ENCODE measurements at regions of chr19 and their contacts with region 1.

Region 1: GRCh38 chr19:17282488-17283255 is 971 bp downstream of the ANKLE1 start:
- DNase-seq: peak; percentile 79 to 94 (median 86)
- H3K4me3 ChIP-seq: peak overlapping the region in 1 of 4 donors; percentile 41
- H3K27ac ChIP-seq: no peak overlapping the region
- H3K4me1 ChIP-seq: peaks cover 10 to 17% of the 10 kb centered on the region in 2 donors
- H3K27me3 ChIP-seq: peaks cover 6% of the 10 kb centered on the region
- CTCF ChIP-seq: peak; percentile 73 to 96 (median 90)
- POLR2A ChIP-seq: no peak

Region 2: GRCh38 chr19:17069218-17069617 is 213.5 kb before region 1 on chr19:
- intact Hi-C with region 1: loop called (anchors 5 kb)
- DNase-seq: no peak
- H3K4me3 ChIP-seq: no peak overlapping the region
- H3K27ac ChIP-seq: no peak overlapping the region
- H3K4me1 ChIP-seq: peaks cover 3 to 5% of the 10 kb centered on the region in 2 donors
- H3K27me3 ChIP-seq: no peaks in the 10 kb centered on the region
- CTCF ChIP-seq: no peak
- POLR2A ChIP-seq: no peak

Region 3: DNA sequence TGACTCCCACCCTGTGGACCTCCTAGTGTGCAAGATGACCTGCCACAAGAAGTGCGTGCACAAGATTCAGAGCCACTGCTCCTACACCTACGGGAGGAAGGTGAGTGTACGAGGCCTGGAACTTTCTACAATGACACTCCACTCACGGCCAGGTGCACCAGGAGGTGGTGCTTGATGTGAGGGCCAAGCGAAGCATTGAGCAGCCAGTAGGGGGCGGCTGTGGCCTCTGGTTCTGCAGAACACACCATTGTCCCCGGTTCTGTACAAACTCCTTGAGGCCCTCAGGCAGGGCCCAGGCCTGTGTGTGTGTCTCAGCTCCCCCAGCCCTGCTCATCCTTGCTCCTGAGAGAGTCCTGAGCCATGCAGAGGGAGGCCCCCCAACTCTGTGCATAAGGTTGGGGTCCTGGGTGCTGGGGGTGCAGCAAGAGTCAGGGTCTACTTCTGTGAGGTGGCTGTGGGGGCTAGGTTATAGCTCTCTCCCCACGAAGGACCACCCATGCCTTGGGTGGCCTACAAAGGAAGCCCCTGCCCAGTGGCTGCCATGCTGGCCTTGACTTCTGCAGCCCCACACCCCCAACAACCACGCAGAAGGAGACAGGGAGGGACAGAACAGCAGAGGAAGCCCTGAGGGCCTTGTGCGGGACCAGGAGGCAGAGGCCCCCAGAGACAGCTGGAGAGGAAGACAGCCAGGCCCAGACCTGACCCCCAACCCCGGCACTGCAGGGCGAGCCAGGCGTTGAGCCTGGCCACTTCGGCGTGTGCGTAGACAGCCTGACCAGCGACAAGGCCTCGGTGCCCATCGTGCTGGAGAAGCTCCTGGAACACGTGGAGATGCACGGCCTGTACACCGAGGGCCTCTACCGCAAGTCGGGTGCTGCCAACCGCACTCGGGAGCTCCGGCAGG is 77.2 kb before region 1 on chr19:
- intact Hi-C with region 1: loop called (anchors 2 to 10 kb)
- DNase-seq: peak; percentile 63 to 89 (median 79)
- H3K4me3 ChIP-seq: no peak overlapping the region
- H3K27ac ChIP-seq: no peak overlapping the region
- H3K4me1 ChIP-seq: no peaks in the 10 kb centered on the region
- H3K27me3 ChIP-seq: no peaks in the 10 kb centered on the region
- CTCF ChIP-seq: peak; percentile 65 to 86 (median 68)
- POLR2A ChIP-seq: no peak

Region 4: DNA sequence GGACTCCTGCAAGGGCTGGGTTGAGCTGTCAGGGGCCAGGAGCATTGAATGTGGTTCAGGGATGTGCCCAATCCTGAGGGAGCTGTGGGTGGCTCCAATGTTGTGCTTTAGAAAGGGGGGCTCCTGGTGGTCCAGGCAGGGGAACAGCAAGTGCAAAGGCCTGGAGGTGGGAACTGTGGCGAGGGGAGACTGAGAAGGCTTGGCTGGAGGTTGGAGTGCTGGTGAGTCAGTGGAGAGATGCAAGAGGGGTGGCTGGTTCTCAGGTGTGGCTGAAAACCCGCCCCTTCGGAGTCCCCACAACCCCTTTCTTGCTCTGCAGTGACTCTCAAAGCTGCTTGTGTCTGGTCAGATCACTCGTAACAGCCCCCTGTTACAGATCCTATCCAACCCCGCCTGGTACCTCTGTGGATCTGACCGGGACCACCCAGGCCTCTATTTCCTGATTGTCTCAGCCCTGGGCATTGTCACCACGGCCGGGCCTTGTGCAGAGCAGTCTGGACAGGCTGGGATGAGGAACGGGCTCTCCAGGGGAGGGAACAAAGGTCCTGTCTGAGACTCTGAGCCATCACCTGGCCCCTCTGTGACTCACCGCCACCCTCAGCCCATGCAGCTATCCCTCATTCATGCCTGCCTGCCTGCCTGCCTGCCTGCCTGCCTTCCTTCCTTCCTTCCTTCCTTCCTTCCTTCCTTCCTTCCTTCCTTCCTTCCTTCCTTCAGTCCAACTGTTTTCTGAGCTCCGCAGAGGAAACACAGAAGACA is 682.9 kb after region 1 on chr19:
- intact Hi-C with region 1: no loop called
- DNase-seq: no peak
- H3K4me3 ChIP-seq: no peak overlapping the region
- H3K27ac ChIP-seq: no peak overlapping the region
- H3K4me1 ChIP-seq: no peaks in the 10 kb centered on the region
- H3K27me3 ChIP-seq: peaks cover 10% of the 10 kb centered on the region
- CTCF ChIP-seq: no peak
- POLR2A ChIP-seq: no peak